ENCODE measurements at regions of chr4 and their contacts with region 1.

Region 1: GRCh38 chr4:88514557-88515511 is 8.7 kb downstream of the PYURF start:
- DNase-seq: no peak
- H3K4me3 Mint-ChIP-seq: no peak overlapping the region
- H3K27ac Mint-ChIP-seq: no peak overlapping the region
- H3K4me1 Mint-ChIP-seq: no peaks in the 10 kb centered on the region
- H3K27me3 Mint-ChIP-seq: no peaks in the 10 kb centered on the region
- CTCF ChIP-seq: no peak

Region 2: DNA sequence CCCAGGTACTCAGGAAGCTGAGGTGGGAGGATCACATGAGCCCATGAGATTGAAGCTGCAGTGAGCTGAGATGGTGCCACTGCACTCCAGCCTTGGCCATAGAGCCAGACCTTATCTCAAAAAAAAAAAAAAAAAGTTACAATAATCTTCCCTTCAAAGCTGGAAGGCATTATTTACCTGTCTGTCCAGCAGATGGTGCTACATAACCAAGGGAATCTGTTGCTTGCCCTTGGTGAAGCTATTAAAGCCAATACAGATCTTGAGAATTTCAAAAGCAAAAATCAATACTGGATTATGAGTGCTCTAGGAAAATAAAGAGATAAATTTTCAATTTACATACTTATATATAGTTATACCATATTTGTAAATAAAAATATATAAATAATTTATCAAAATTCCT is 481.5 kb before region 1 on chr4:
- CTCF ChIA-PET with region 1: interaction called, 7 read pairs
- POLR2A ChIA-PET with region 1: no interaction called
- intact Hi-C with region 1: loop called (anchors 2 kb)
- DNase-seq: peak; percentile 77
- H3K4me3 Mint-ChIP-seq: no peak overlapping the region
- H3K27ac Mint-ChIP-seq: no peak overlapping the region
- H3K4me1 Mint-ChIP-seq: peaks cover 10% of the 10 kb centered on the region
- H3K27me3 Mint-ChIP-seq: no peaks in the 10 kb centered on the region
- CTCF ChIP-seq: peak; percentile 69

Region 3: GRCh38 chr4:88225232-88226105 is 289.4 kb before region 1 on chr4:
- CTCF ChIA-PET with region 1: interaction called, 41 read pairs
- POLR2A ChIA-PET with region 1: interaction called, 3 read pairs
- intact Hi-C with region 1: no loop called
- DNase-seq: no peak
- H3K4me3 Mint-ChIP-seq: no peak overlapping the region
- H3K27ac Mint-ChIP-seq: no peak overlapping the region
- H3K4me1 Mint-ChIP-seq: no peaks in the 10 kb centered on the region
- H3K27me3 Mint-ChIP-seq: no peaks in the 10 kb centered on the region
- CTCF ChIP-seq: no peak

Region 4: DNA sequence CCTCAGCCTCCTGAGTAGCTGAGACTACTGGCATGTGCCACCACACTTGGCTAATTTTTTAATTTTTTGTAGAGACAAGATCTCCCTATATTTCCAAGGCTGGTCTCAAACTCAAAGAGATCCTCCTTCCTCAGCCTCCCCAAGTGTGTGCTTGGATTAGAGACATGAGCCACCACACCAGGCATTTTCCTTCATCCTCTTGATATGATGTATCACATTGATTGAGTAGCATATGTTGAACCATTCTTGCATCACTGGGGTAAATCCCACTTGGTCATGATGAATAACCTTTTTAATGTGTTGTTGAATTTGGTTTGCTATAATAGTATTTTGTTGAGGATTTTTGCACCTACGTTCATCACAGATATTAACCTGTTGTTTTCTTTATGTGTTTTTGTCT is 206.2 kb before region 1 on chr4:
- CTCF ChIA-PET with region 1: no interaction called
- POLR2A ChIA-PET with region 1: no interaction called
- intact Hi-C with region 1: no loop called
- DNase-seq: no peak
- H3K4me3 Mint-ChIP-seq: no peak overlapping the region
- H3K27ac Mint-ChIP-seq: no peak overlapping the region
- H3K4me1 Mint-ChIP-seq: no peaks in the 10 kb centered on the region
- H3K27me3 Mint-ChIP-seq: peaks cover 45% of the 10 kb centered on the region
- CTCF ChIP-seq: no peak

Region 5: DNA sequence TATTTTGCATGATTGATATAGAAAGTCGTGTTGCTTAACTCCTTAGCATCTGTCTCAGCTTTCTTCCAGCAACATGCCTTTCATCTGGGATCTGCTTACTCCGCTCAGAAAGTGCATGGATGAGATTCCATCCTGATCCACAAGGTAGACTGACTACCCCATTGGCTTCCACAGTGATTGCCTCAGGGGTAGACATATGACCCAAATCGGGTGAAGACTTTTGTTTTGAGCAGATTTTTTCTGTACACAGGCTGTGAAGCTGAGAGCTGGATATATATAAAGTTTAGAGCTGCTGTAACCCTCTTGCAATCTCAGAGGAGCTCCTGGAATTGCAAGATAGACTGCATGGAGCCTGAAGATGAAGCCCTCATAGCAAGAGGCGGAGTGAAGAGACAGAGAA is 144.9 kb before region 1 on chr4:
- CTCF ChIA-PET with region 1: interaction called, 31 read pairs
- POLR2A ChIA-PET with region 1: no interaction called
- intact Hi-C with region 1: loop called (anchors 1 kb)
- DNase-seq: no peak
- H3K4me3 Mint-ChIP-seq: no peak overlapping the region
- H3K27ac Mint-ChIP-seq: no peak overlapping the region
- H3K4me1 Mint-ChIP-seq: no peaks in the 10 kb centered on the region
- H3K27me3 Mint-ChIP-seq: no peaks in the 10 kb centered on the region
- CTCF ChIP-seq: no peak

Region 6: GRCh38 chr4:88378691-88379559 is 135.9 kb before region 1 on chr4 and contains the start of gene HERC6:
- CTCF ChIA-PET with region 1: interaction called, 8 read pairs
- POLR2A ChIA-PET with region 1: no interaction called
- intact Hi-C with region 1: loop called (anchors 1 kb)
- DNase-seq: peak; percentile 94
- H3K4me3 Mint-ChIP-seq: peak within 1 kb of the TSS; percentile 90
- H3K27ac Mint-ChIP-seq: peak within 1 kb of the TSS; percentile 66
- H3K4me1 Mint-ChIP-seq: no peaks in the 10 kb centered on the region
- H3K27me3 Mint-ChIP-seq: no peaks in the 10 kb centered on the region
- CTCF ChIP-seq: peak; percentile 57
- total RNA-seq, gene HERC6: 1.7 and 2.4 TPM in 2 replicates

Region 7: GRCh38 chr4:88456757-88457306 is 58.0 kb before region 1 on chr4 and contains the start of gene HERC5:
- CTCF ChIA-PET with region 1: interaction called, 9 read pairs
- POLR2A ChIA-PET with region 1: interaction called, 3 read pairs
- intact Hi-C with region 1: loop called (anchors 5 kb)
- DNase-seq: peak; percentile 95
- H3K4me3 Mint-ChIP-seq: peak within 1 kb of the TSS; percentile 95
- H3K27ac Mint-ChIP-seq: peak within 1 kb of the TSS; percentile 57
- H3K4me1 Mint-ChIP-seq: no peaks in the 10 kb centered on the region
- H3K27me3 Mint-ChIP-seq: no peaks in the 10 kb centered on the region
- CTCF ChIP-seq: peak; percentile 62
- total RNA-seq, gene HERC5: 0.54 and 0.63 TPM in 2 replicates

Region 8: GRCh38 chr4:88503344-88503743 is 11.5 kb before region 1 on chr4:
- CTCF ChIA-PET with region 1: interaction called, 13 read pairs
- POLR2A ChIA-PET with region 1: interaction called, 3 read pairs
- intact Hi-C with region 1: no loop called
- DNase-seq: no peak
- H3K4me3 Mint-ChIP-seq: no peak overlapping the region
- H3K27ac Mint-ChIP-seq: no peak overlapping the region
- H3K4me1 Mint-ChIP-seq: no peaks in the 10 kb centered on the region
- H3K27me3 Mint-ChIP-seq: no peaks in the 10 kb centered on the region
- CTCF ChIP-seq: no peak

Region 9: GRCh38 chr4:88690355-88690754 is 175.5 kb after region 1 on chr4:
- CTCF ChIA-PET with region 1: no interaction called
- POLR2A ChIA-PET with region 1: no interaction called
- intact Hi-C with region 1: no loop called
- DNase-seq: peak; percentile 39
- H3K4me3 Mint-ChIP-seq: no peak overlapping the region
- H3K27ac Mint-ChIP-seq: no peak overlapping the region
- H3K4me1 Mint-ChIP-seq: no peaks in the 10 kb centered on the region
- H3K27me3 Mint-ChIP-seq: no peaks in the 10 kb centered on the region
- CTCF ChIP-seq: no peak

Region 10: DNA sequence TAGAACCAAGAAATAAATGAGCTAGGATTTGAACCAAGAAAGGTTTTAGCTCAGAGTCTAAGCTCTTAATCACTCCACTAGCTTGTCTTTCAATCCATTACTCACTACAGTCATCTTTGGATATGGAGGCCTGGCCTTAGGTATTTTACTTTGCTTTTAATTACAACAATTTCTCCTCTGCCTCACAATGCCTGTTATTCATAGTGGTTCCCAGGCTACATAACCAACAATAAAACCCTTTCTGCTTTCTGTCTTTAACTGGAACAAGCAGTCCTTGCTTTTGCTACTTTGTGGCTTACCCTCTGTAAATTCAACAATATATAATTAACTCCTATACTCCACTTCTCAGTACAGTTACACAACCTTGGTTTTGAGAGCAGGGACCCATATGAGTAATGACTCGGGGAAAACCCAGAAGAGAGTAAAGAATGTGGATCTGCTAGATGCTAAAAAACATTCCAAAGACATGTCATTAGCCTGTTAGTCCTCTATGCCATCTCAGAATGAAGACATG is 277.5 kb after region 1 on chr4:
- CTCF ChIA-PET with region 1: no interaction called
- POLR2A ChIA-PET with region 1: no interaction called
- intact Hi-C with region 1: no loop called
- DNase-seq: peak; percentile 77
- H3K4me3 Mint-ChIP-seq: no peak overlapping the region
- H3K27ac Mint-ChIP-seq: peak overlapping the region; percentile 94
- H3K4me1 Mint-ChIP-seq: peaks cover 18% of the 10 kb centered on the region
- H3K27me3 Mint-ChIP-seq: no peaks in the 10 kb centered on the region
- CTCF ChIP-seq: no peak

Region 11: GRCh38 chr4:88938135-88938534 is 423.3 kb after region 1 on chr4:
- CTCF ChIA-PET with region 1: no interaction called
- POLR2A ChIA-PET with region 1: no interaction called
- intact Hi-C with region 1: no loop called
- DNase-seq: peak; percentile 94
- H3K4me3 Mint-ChIP-seq: peak overlapping the region; percentile 5
- H3K27ac Mint-ChIP-seq: peak overlapping the region; percentile 94
- H3K4me1 Mint-ChIP-seq: peaks cover 12% of the 10 kb centered on the region
- H3K27me3 Mint-ChIP-seq: no peaks in the 10 kb centered on the region
- CTCF ChIP-seq: no peak